ENCODE measurements at regions of chr19 and their contacts with region 1.

Region 1: GRCh38 chr19:48340995-48341394 is 15.6 kb downstream of the EMP3 start:
- DNase-seq: no peak
- ATAC-seq: no peak
- H3K4me3 ChIP-seq: no peak overlapping the region
- H3K4me3 Mint-ChIP-seq: no peak overlapping the region
- H3K27ac ChIP-seq: no peak overlapping the region
- H3K27ac Mint-ChIP-seq: no peak overlapping the region
- H3K4me1 ChIP-seq: no peaks in the 10 kb centered on the region
- H3K4me1 Mint-ChIP-seq: no peaks in the 10 kb centered on the region
- H3K27me3 ChIP-seq: no peaks in the 10 kb centered on the region
- H3K27me3 Mint-ChIP-seq: no peaks in the 10 kb centered on the region

Region 2: GRCh38 chr19:48321622-48322591 is 19.1 kb before region 1 on chr19:
- CTCF ChIA-PET with region 1: no interaction called
- POLR2A ChIA-PET with region 1: no interaction called
- DNase-seq: peak; percentile 98 to 100 (median 99)
- ATAC-seq: peak; percentile 70 to 76 (median 72)
- H3K4me3 ChIP-seq: peak overlapping the region; percentile 80 to 96
- H3K4me3 Mint-ChIP-seq: peak overlapping the region; percentile 91 to 96 (median 95)
- H3K27ac ChIP-seq: peak overlapping the region; percentile 100
- H3K27ac Mint-ChIP-seq: peak overlapping the region; percentile 99 to 100
- H3K4me1 ChIP-seq: peaks cover 29 to 62% of the 10 kb centered on the region in 2 experiments
- H3K4me1 Mint-ChIP-seq: peaks cover 60 to 67% (median 63%) of the 10 kb centered on the region in 3 donors
- H3K27me3 ChIP-seq: no peaks in the 10 kb centered on the region
- H3K27me3 Mint-ChIP-seq: no peaks in the 10 kb centered on the region

Region 3: GRCh38 chr19:48403606-48404005 is 62.6 kb after region 1 on chr19:
- CTCF ChIA-PET with region 1: interaction called in 1 of 2 experiments, 10 read pairs
- POLR2A ChIA-PET with region 1: no interaction called
- DNase-seq: peak in 32 of 35 experiments; percentile 28 to 77 (median 52)
- ATAC-seq: peak; percentile 57 to 74 (median 70)
- H3K4me3 ChIP-seq: no peak overlapping the region
- H3K4me3 Mint-ChIP-seq: no peak overlapping the region
- H3K27ac ChIP-seq: no peak overlapping the region
- H3K27ac Mint-ChIP-seq: peak overlapping the region in 1 of 2 donors; percentile 12
- H3K4me1 ChIP-seq: peaks cover 0 to 10% of the 10 kb centered on the region in 2 experiments
- H3K4me1 Mint-ChIP-seq: peaks cover 10 to 15% (median 13%) of the 10 kb centered on the region in 3 donors
- H3K27me3 ChIP-seq: peaks cover 0 to 11% of the 10 kb centered on the region in 2 experiments
- H3K27me3 Mint-ChIP-seq: peaks cover 11 to 15% of the 10 kb centered on the region in 2 donors

Region 4: DNA sequence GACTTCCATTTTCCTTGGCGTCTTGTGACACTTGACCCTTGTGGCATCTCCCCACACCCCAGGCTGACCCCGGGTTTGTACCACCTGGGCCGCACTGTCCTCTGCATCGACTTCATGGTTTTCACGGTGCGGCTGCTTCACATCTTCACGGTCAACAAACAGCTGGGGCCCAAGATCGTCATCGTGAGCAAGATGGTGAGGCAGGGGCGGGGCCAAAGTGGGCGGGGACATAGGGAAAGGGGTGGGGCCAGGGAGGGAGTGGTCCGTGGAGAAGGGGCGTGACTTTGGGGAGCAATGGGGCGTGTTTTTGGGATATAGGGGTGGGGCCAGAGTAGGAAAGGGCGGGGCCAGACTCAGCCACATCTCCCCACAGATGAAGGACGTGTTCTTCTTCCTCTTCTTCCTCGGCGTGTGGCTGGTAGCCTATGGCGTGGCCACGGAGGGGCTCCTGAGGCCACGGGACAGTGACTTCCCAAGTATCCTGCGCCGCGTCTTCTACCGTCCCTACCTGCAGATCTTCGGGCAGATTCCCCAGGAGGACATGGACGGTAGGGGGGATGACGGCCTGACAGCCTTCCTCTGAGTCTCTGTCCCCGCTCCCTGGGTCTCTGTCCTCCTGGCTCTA is 859.4 kb after region 1 on chr19:
- CTCF ChIA-PET with region 1: no interaction called
- POLR2A ChIA-PET with region 1: no interaction called
- DNase-seq: peak in 1 of 35 experiments; percentile 14
- ATAC-seq: no peak
- H3K4me3 ChIP-seq: no peak overlapping the region
- H3K4me3 Mint-ChIP-seq: no peak overlapping the region
- H3K27ac ChIP-seq: no peak overlapping the region
- H3K27ac Mint-ChIP-seq: no peak overlapping the region
- H3K4me1 ChIP-seq: no peaks in the 10 kb centered on the region
- H3K4me1 Mint-ChIP-seq: peaks cover 0 to 5% (median 0%) of the 10 kb centered on the region in 3 donors
- H3K27me3 ChIP-seq: peaks cover 0 to 14% of the 10 kb centered on the region in 2 experiments
- H3K27me3 Mint-ChIP-seq: peaks cover 0 to 1% of the 10 kb centered on the region in 2 donors